Activated CD8-positive, alpha-beta memory T cell treated with anti-CD3 and anti-CD28 coated beads, Interleukin-2, amount 10 ng/mL, durations not matched to agents 7 days and 5 days (primary cell): ENCODE measurements at regions of chr1 and their contacts with region 1.

Region 1: DNA sequence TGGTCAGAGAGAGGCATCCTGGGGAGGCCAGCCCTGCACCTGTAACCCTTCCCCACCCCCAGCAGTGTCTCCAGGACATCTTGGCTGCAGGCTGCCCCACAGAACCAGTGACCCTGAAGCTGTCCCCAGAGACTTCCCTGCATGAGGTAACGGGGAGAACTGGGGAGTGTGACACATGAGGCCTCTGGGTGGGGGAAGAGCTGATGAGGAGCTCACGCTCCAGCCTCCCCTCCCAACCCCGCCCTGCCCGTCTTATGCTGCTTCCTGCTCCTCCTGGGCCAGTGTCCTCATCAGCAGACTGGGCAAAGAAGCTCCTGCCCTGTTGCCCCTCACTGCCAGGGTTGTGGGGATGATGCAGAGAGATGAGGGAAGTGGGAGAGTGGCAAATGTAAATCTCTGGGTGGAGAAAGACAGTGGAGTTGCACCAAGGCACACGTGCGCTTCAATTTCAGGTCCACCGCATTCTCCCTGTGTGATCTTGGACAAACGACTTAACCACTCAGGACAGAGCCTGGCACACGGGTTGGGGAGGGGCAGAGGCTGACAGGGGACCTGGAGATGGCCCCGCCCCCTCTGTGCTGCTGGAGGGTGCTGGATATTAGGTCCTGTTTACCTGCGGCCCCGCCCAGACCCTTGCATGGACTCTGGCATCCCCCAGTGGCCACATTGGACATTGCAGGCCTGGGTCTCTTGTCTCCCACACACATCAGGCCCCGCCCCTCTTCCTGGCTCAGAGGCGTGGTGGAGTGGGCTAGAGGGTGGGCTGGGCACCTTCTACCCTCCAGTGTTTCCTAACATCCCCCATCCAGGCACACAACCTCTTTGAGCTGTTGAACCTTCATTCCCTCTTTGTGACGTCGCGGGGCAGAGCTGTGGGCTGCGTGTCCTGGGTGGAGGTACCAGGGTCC is 12.3 kb downstream of the CLCNKB start:
- DNase-seq: peak; percentile 94
- ATAC-seq: peak; percentile 98
- H3K4me3 Mint-ChIP-seq: no peak overlapping the region
- H3K27ac Mint-ChIP-seq: no peak overlapping the region
- H3K4me1 Mint-ChIP-seq: peaks cover 11% of the 10 kb centered on the region
- H3K27me3 Mint-ChIP-seq: peaks cover 4% of the 10 kb centered on the region

Region 2: DNA sequence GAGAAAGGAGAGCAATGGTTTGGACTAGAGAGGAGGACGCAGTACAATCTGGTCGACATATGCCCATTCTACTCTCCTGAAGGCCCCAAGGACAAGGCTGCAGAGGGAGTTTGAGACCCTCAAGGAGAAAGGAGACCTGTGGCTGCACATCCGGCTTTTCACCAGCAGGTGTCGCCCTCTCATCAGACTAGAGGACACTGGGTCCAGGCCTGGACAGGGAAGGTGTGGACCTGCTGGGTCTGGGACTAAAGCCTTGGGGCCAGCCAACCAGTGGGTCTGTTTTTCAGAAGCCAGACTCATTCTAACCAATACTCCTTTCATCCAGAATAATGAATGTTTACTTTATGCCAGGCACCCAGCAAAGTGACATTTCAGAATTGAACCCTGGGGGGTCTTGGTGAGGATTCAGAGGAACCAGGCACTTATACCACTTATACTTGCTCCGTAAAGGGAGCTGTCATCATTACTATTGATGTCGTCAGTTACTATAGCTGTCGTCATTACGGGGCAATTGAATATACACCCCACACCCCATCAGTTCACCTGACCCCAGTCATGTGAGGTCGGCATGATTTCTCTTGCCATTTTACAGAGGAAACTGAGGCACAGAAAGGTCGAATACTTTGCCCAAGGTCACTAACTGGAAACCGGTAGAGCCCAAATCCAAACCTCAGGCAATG is 46.7 kb before region 1 on chr1:
- CTCF ChIA-PET with region 1: interaction called, 39 read pairs
- DNase-seq: peak; percentile 83
- ATAC-seq: peak; percentile 62
- H3K4me3 Mint-ChIP-seq: no peak overlapping the region
- H3K27ac Mint-ChIP-seq: no peak overlapping the region
- H3K4me1 Mint-ChIP-seq: peaks cover 14% of the 10 kb centered on the region
- H3K27me3 Mint-ChIP-seq: peaks cover 15% of the 10 kb centered on the region